ENCODE measurements at regions of chr1 and their contacts with region 1.

Region 1: DNA sequence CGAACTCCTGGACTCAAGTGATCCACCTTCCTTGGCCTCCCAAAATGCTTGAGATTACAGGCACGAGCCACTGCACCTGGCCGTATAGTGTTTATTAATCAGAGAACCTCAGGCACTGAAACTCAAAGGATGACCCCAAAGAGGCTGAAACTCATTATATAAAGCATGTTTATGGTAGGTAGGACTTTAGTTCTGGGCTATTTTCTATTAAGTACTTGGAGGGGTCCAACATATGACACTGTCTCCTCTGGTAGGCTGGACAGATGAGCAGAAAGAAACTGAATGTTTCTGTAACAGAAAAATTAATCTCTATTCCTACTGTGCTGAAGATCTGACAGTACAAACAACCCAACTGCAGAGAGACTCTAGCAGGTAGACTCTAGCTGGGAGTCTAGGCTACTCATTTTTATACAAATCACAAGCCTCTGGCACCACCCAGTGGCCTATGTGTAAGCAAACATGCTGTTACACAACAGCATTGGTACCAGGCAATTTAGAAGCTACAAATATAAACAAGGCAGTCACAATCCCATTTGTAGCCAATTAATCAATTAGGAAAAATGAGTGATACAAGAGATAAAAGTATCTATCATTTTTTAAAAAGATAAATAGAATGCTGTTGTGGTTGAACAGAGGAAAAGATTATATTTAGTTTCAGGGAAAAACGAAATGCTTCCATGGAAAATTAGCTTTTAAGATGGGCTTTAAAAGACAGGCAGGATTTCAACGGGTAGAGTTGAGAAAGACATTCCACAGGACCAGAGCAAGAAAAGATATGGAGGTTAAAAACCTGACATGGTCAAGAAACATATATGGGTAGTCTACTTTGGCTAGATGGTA is 10.4 kb downstream of the DCAF8 start:
- DNase-seq: peak; percentile 75
- ATAC-seq: peak; percentile 90 to 96

Region 2: GRCh38 chr1:159869173-159869572 is 382.7 kb before region 1 on chr1:
- intact Hi-C with region 1: no loop called
- DNase-seq: no peak
- ATAC-seq: no peak

Region 3: GRCh38 chr1:160205242-160206035 is 46.5 kb before region 1 on chr1 and contains the start of gene PEA15:
- intact Hi-C with region 1: loop called in 1 of 2 experiments (anchors 5 kb)
- DNase-seq: peak; percentile 86
- ATAC-seq: peak; percentile 87 to 90
- total RNA-seq, gene PEA15: 188 to 189 TPM

Region 4: GRCh38 chr1:160307118-160307854 is 55.4 kb after region 1 on chr1:
- intact Hi-C with region 1: no loop called
- DNase-seq: no peak
- ATAC-seq: peak in 1 of 2 donors; percentile 24